Transverse colon (tissue), 4 donors: ENCODE measurements at regions of chr6 and their contacts with region 1.

Region 1: GRCh38 chr6:83008663-83009062 is 57.0 kb downstream of the UBE3D start:
- DNase-seq: no peak
- H3K4me3 ChIP-seq: no peak overlapping the region
- H3K27ac ChIP-seq: no peak overlapping the region
- H3K4me1 ChIP-seq: peaks cover 0 to 5% (median 0%) of the 10 kb centered on the region in 4 donors
- H3K27me3 ChIP-seq: no peaks in the 10 kb centered on the region
- CTCF ChIP-seq: no peak
- EP300 ChIP-seq: no peak
- POLR2A ChIP-seq: no peak

Region 2: GRCh38 chr6:82458147-82458546 is 550.5 kb before region 1 on chr6:
- in situ Hi-C with region 1: no loop called
- intact Hi-C with region 1: loop called (anchors 10 kb)
- DNase-seq: no peak
- H3K4me3 ChIP-seq: no peak overlapping the region
- H3K27ac ChIP-seq: no peak overlapping the region
- H3K4me1 ChIP-seq: no peaks in the 10 kb centered on the region
- H3K27me3 ChIP-seq: no peaks in the 10 kb centered on the region
- CTCF ChIP-seq: no peak
- EP300 ChIP-seq: no peak
- POLR2A ChIP-seq: no peak

Region 3: GRCh38 chr6:83558975-83559374 is 550.3 kb after region 1 on chr6:
- in situ Hi-C with region 1: no loop called
- intact Hi-C with region 1: no loop called
- DNase-seq: no peak
- H3K4me3 ChIP-seq: no peak overlapping the region
- H3K27ac ChIP-seq: no peak overlapping the region
- H3K4me1 ChIP-seq: no peaks in the 10 kb centered on the region
- H3K27me3 ChIP-seq: no peaks in the 10 kb centered on the region
- CTCF ChIP-seq: no peak
- EP300 ChIP-seq: no peak
- POLR2A ChIP-seq: no peak